ENCODE measurements at regions of chr14 and their contacts with region 1.

Region 1: GRCh38 chr14:24678801-24679247 is 44.8 kb upstream of the GZMB start:
- DNase-seq: peak; percentile 78
- H3K4me3 ChIP-seq: no peak overlapping the region
- H3K27ac ChIP-seq: no peak overlapping the region
- H3K4me1 ChIP-seq: no peaks in the 10 kb centered on the region
- H3K27me3 ChIP-seq: peaks cover 3 to 9% of the 10 kb centered on the region in 2 experiments
- CTCF ChIP-seq: peak; percentile 89 to 99
- POLR2A ChIP-seq: no peak

Region 2: DNA sequence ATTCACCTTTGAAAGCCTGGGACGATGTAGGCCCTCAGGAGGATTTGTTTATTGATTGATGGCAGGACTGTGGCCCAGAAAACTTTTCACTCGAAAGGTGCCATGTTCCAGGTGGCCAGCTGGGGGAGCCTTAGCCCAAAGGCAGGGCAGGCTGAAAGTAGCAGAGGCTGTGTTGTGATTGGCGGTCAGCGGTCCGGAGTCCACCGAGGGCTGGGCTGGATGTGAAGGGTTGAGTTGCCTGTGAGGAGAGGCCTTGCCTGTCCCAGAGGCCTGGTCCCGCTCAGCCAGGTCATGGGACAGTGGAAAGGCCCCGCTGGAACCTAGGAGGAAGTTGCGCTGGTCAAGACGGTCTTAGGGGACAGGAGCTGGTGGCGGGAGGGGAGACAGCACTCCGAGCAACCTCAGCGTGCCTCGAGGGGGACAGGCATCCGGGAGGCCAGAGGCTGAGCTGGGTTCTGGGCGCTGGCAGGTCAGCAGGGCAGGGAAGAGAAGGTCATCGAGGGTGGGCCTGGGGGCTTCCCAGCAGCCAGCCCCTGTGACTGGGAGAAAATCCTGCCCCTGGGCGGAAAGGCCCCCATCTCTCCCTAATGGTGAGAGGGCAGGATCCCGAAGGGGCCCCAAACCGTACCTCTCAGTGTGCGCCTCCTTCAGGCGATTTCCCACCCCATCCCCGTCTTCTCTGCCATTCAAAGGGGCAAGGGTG is 197.1 kb before region 1 on chr14:
- CTCF ChIA-PET with region 1: no interaction called
- POLR2A ChIA-PET with region 1: no interaction called
- dilution Hi-C with region 1: no loop called
- intact Hi-C with region 1: loop called (anchors 1 kb)
- DNase-seq: peak; percentile 31
- H3K4me3 ChIP-seq: no peak overlapping the region
- H3K27ac ChIP-seq: no peak overlapping the region
- H3K4me1 ChIP-seq: no peaks in the 10 kb centered on the region
- H3K27me3 ChIP-seq: no peaks in the 10 kb centered on the region
- CTCF ChIP-seq: peak; percentile 61 to 79
- POLR2A ChIP-seq: no peak